AG04449 (cell line): ENCODE measurements at regions of chr5 and their contacts with region 1.

Region 1: DNA sequence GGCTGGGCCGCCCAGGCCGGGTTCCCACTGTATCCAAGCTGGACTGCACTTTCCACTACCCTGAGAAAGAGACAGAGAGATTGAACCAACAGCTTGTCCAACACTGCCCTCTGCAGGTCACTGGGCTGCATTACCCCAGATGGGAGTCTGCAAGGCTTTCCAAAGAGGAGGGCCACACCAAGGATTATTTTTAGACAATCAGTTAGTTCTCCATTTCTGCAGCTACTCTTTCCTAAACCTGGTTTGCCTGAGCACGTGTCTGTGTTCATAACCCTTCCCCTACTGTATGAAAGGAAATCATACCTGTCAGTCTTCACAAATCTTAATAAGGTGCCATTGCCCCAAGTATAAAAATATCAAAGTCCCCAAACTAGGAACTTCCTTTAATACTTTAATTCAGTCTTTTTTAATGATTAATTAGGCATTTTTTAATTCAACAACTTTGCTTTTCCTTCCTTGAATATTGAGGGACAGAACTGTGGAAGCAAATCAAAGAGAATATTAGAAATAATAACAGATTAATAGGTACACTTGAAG is 13.4 kb upstream of the FGF1 start:
- DNase-seq: no peak
- H3K4me3 ChIP-seq: no peak overlapping the region
- CTCF ChIP-seq: peak; percentile 87

Region 2: DNA sequence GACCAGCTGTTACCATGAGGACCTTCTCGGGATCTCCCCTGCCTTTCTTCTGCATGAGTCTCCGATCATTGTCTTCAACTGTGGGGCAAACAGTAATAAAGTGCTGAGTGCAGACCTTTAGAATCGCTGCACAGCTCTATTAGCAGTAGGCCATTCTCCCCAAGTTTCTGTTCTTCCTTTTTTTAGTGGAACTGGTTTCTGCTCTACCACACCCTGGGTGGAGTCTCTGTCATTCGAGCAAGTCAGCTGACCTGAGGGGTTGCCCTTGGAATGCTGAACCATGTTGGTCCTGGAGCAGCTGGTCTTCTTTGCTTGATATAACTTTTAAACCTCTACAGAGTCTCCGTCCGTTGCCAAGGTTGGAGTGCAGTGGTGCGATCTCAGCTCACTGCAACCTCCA is 653.1 kb before region 1 on chr5:
- CTCF ChIA-PET with region 1: no interaction called
- POLR2A ChIA-PET with region 1: no interaction called
- DNase-seq: no peak
- H3K4me3 ChIP-seq: no peak overlapping the region
- CTCF ChIP-seq: no peak

Region 3: DNA sequence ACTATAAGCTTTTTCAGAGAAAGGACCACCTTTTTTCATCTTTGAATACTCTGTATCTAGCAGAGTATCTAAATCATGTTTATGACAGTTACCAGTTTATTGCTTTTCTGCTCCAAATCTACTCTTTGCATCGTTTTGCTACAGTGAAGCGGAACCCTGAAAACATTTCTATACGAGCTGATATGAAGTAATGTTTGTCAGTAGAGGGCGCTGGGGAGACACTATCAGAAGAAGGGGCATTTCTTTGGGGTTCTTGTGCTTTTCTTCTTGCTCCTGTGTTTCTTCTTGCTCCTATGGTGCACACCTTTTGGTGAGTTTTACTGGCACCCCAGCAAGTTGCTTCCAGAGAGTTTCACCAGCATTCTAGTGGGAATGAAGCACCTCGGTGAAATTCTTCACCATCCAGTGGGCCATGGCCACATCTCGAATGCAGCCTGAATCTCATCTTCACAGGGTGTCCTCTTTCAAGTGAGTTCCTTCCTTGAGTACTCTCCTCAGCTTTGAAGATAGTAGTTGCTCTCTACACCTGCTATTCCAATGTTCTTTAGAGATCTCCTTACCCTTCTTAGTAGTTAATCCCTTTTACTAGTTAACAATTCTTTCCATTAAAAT is 111.8 kb before region 1 on chr5:
- CTCF ChIA-PET with region 1: interaction called, 18 read pairs
- POLR2A ChIA-PET with region 1: no interaction called
- DNase-seq: no peak
- H3K4me3 ChIP-seq: no peak overlapping the region
- CTCF ChIP-seq: peak; percentile 51

Region 4: DNA sequence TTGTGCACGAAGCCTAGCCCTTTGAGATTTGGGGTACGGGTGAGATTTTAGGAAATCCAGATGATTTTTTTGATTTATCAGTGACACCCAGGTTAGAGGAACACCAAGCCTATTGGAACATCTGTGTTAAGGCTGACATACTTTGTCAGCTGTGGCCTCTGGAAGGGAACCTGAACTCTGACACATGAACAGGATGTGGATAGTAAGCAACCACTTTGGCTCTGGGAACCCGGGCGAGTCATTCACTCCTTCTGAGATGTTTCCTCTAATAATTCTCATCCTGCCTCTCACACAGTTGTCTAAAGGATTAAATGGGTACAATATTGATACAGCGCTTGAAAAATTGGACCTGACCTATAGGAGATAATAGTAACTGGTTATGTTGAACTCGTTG is 81.1 kb before region 1 on chr5:
- CTCF ChIA-PET with region 1: interaction called, 533 read pairs
- POLR2A ChIA-PET with region 1: no interaction called
- DNase-seq: no peak
- H3K4me3 ChIP-seq: no peak overlapping the region
- CTCF ChIP-seq: no peak

Region 5: GRCh38 chr5:142650060-142650459 is 49.2 kb before region 1 on chr5:
- CTCF ChIA-PET with region 1: interaction called, 482 read pairs
- POLR2A ChIA-PET with region 1: interaction called, 7 read pairs
- DNase-seq: no peak
- H3K4me3 ChIP-seq: no peak overlapping the region
- CTCF ChIP-seq: no peak

Region 6: DNA sequence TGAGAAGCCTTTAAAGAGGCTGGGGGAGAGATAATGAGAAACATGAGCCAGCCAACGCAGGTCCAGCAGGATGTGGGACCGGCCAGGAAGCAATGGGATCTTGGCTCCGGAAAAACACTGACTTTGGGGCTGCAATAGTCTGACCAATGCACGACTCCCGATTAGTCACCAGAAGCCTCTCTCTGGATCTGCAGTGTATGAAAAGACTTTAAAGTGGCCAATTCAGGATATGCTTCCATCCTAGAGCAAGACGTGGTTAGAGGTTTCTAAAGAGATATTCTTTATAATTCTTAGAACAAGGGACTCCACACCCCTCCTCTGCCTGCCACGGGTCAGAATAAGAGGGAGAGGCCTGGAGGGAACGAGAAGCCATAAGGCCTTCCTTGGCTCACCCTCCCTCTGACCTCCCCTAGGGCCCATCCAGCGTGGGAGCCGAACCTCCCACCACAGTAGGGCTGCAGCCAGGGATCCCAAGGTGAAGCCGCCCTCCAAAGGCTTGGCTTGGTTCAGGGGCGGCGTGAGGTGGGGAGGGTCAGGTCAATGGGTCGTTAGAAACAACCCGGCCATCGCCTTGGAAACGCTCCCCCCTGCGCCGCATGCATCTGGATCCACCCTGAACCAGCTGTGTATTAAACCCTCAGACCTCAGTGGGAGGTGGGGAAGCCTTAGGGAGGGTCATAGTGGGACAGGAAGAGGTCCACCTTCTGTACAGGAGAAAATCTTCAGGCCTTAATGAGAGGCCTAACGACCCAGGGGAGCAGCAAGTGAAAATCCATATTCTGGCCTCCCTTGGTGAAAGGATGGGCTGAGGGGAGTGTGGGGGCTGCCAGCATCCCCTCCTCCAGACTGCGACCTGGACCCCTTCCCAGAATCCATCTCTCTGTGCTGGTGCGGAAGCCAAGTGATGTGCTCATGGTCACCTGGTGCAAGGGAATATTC is 24.5 kb before region 1 on chr5:
- CTCF ChIA-PET with region 1: interaction called, 67 read pairs
- POLR2A ChIA-PET with region 1: no interaction called
- DNase-seq: peak; percentile 26
- H3K4me3 ChIP-seq: no peak overlapping the region
- CTCF ChIP-seq: no peak